ENCODE measurements at regions of chr1 and their contacts with region 1.

Region 1: DNA sequence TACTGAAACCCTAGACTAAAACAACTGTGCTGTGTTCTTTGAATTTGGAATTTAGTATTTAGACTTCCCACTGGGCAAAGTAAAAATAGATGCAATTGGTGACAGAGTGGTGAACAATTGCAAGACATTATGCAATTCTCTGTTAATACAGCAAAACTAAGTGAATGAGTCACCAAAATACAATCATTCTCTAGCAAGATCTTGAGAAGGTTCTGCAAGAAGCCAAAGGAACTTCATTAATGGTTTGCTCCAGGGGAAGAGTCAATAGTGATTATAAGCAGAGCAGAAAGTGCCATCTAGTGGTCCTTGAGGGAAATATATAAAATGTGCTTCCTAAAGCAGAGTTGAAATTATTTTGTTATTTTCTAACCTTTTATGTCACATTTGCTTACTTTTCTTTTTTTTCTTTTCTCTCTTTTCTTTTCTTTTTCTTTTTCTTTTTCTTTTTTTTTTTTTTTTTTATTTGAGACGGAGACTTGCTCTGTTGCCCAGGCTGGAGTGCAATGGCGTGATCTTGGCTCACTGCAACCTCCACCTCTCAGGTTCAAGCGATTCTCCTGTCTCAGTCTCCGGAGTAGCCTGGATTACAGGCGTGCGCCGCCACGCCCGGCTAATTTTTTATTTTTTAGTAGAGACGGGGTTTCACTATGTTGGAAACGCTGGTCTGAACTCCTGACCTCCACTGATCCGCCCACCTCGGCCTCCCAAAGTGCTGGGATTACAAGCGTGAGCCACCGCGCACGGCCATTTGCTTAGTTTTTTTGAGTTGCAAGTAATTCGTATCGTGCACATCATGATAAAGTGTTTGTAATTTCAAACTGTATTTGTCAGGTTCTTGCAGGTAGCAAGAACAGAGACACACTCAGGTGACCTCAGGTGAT is 99.2 kb downstream of the CTH start:
- DNase-seq: no peak
- ATAC-seq: peak in 7 of 8 donors; percentile 41 to 86 (median 72)
- H3K4me3 ChIP-seq: no peak overlapping the region
- H3K27ac ChIP-seq: no peak overlapping the region
- H3K4me1 ChIP-seq: peaks cover 0 to 6% (median 0%) of the 10 kb centered on the region in 9 donors
- H3K27me3 ChIP-seq: peaks cover 0 to 8% (median 0%) of the 10 kb centered on the region in 7 donors
- CTCF ChIP-seq: peak; percentile 47 to 80 (median 71)

Region 2: DNA sequence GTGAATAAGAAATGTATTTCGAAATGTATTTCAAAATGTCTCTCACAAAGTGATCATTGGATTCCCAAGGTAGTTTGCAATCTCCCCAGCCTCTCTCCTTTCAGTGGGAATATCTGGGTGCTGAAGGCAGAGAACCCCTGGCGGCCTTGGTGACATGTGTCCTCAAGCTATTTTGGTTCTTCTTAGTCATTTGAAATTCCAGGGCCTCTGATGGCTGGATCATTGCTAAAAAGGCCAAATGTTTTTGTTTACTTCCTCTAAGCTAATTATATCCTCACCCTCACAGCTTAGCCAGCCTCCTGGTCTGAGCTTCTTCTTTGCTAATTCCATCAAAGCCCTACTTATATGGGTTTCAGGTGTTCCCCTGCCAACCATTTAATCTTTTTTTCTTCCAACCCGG is 376.1 kb before region 1 on chr1:
- intact Hi-C with region 1: loop called in 9 of 10 experiments (anchors 1 to 10 kb)
- DNase-seq: peak in 1 of 2 donors; percentile 14
- ATAC-seq: peak in 7 of 8 donors; percentile 67 to 92 (median 76)
- H3K4me3 ChIP-seq: no peak overlapping the region
- H3K27ac ChIP-seq: peak overlapping the region in 4 of 10 donors; percentile 3 to 42 (median 12)
- H3K4me1 ChIP-seq: peaks cover 0 to 10% (median 3%) of the 10 kb centered on the region in 9 donors
- H3K27me3 ChIP-seq: no peaks in the 10 kb centered on the region
- CTCF ChIP-seq: no peak

Region 3: GRCh38 chr1:70436622-70437251 is 73.5 kb before region 1 on chr1:
- intact Hi-C with region 1: loop called in 5 of 10 experiments (anchors 2 to 10 kb)
- DNase-seq: peak in 1 of 2 donors; percentile 8
- ATAC-seq: peak in 2 of 8 donors; percentile 16 to 50
- H3K4me3 ChIP-seq: no peak overlapping the region
- H3K27ac ChIP-seq: peak overlapping the region in 1 of 10 donors; percentile 23
- H3K4me1 ChIP-seq: peaks cover 0 to 13% (median 10%) of the 10 kb centered on the region in 9 donors
- H3K27me3 ChIP-seq: no peaks in the 10 kb centered on the region
- CTCF ChIP-seq: peak in 7 of 9 donors; percentile 13 to 69 (median 57)

Region 4: DNA sequence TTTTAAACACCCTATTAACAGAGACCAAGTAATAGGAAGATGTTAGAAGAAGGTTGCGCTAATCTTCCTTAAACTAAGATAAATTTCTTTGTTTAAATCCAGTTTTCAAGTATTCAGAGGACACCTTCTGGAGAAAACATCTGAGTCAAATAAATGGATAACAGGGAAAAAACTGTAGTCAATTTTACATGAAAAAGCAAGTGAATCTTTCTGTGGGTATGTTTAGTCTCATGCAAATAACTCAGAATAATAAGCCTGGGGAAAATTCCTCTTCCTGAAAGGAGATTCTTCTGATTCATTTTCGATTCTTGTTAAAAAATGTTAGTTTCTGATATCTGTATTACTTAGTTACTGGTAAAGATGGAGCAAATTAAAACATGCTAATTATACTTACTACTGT is 46.3 kb after region 1 on chr1:
- intact Hi-C with region 1: no loop called
- DNase-seq: no peak
- ATAC-seq: no peak
- H3K4me3 ChIP-seq: no peak overlapping the region
- H3K27ac ChIP-seq: no peak overlapping the region
- H3K4me1 ChIP-seq: peaks cover 0 to 4% (median 0%) of the 10 kb centered on the region in 9 donors
- H3K27me3 ChIP-seq: no peaks in the 10 kb centered on the region
- CTCF ChIP-seq: no peak

Measured in heart right ventricle (tissue), 16 donors.